HEK293 (cell line): ENCODE measurements at regions of chr10 and their contacts with region 1.

Region 1: DNA sequence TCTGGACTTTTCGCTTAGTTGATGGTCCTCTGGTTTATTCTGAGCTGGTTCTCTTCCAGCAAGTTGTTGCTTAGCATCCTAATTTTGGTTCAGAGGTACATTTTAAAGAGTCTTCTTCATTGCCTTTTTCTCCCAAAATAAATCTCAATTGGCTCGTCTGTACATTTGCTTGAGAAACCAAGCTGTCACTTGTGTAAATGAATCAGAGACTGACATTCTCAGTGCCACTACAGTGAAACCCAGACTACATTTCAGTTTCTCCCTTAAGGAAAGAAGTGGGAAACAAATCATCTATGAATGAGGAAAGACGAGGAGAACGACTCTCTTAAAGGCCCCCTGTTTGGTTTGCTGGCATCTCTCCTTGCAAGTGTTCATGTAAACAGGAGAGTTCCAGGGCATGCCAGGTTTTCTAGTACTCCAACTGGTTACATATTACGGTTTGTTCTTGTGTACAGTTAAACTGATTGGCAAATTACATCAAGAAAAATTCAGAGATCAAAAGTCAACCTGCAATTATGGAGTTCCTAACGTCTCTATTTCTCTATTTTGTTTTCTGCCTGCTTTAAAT is 654.6 kb downstream of the SH2D4B start:
- H3K4me3 ChIP-seq: no peak overlapping the region
- H3K27ac ChIP-seq: no peak overlapping the region
- H3K4me1 ChIP-seq: no peaks in the 10 kb centered on the region
- CTCF ChIP-seq: no peak

Region 2: GRCh38 chr10:81127931-81128330 is 64.4 kb before region 1 on chr10:
- CTCF ChIA-PET with region 1: no interaction called
- POLR2A ChIA-PET with region 1: no interaction called
- H3K4me3 ChIP-seq: no peak overlapping the region
- H3K27ac ChIP-seq: no peak overlapping the region
- H3K4me1 ChIP-seq: no peaks in the 10 kb centered on the region
- CTCF ChIP-seq: no peak

Region 3: DNA sequence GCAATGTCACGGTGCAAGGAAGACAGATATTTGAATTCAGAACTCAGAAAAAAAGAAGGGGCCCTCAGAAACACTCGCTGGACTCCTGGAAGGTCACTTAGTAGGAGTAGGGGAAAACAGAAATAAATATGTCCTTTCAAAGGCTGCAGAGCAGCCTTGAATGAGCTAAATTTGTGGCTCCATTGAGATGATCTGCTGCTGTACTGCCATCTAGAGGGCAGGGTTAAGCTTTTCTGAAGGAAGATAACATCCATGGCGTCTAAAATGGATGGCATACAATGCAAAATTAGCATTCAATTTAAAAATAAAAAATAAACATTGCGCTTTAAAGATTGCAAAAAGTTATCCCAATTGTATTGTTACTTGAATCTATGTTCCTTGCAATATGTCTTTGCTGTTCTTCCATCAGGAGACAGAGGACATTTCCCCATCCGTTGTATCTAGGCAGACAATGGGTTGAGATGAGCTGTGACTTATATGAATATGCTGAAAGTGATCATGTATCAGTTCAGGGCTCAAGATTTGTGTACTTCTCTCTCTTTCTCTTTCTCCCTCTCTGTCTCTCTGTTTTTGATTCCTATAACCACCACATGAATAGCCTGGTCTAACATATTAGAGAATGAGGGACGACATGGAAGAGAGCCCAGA is 12.4 kb before region 1 on chr10:
- CTCF ChIA-PET with region 1: interaction called, 14 read pairs
- POLR2A ChIA-PET with region 1: no interaction called
- H3K4me3 ChIP-seq: no peak overlapping the region
- H3K27ac ChIP-seq: no peak overlapping the region
- H3K4me1 ChIP-seq: no peaks in the 10 kb centered on the region
- CTCF ChIP-seq: no peak